ENCODE measurements at regions of chr2 and their contacts with region 1.

Region 1: DNA sequence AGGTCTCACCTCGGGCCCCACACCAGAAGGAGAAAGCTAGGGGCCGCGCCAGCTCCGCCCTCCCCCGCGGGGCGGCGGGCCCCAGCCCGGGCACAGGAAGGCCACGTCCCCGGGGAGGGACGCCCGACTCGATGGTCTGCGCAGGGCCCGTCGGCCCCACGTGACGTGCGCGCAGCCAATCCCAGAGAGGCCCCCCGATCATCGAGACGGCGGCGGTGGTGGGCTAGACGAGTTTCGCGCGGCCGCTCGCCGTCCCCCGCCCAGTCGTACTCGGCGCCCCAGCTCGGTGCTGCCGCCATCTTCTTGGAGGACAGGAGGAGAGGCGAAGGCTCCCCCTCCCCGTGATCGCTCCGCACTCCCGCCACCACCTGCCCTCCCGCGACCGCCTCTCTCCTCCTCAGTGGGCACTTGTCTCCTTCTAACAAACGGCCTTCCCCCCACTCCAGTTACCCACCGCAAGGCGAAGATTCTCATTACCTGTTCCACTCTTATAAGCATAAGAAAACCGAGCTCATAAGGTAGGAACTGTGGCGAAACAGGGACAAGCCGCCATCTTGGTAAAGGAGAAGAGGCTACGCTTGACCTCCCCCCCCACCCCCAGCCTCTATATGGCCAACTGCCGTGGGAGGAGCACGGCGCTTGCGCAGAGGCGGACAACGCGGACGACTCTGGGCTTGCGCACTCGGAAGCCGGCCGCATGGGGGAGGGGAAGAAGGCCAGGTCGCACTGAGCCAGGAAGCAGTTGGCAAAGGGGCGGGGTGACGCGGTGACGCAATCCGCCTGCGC is at the start of gene HDLBP:
- DNase-seq: peak; percentile 99
- H3K4me3 ChIP-seq: peak within 1 kb of the TSS; percentile 96
- H3K27ac ChIP-seq: peak within 1 kb of the TSS; percentile 87
- H3K4me1 ChIP-seq: peaks cover 68% of the 10 kb centered on the region
- CTCF ChIP-seq: peak; percentile 79
- total RNA-seq, gene HDLBP: 155 and 176 TPM in 2 replicates

Region 2: GRCh38 chr2:241339839-241340630 is 24.7 kb after region 1 on chr2:
- CTCF ChIA-PET with region 1: no interaction called
- POLR2A ChIA-PET with region 1: interaction called, 4 read pairs
- intact Hi-C with region 1: loop called (anchors 1 kb)
- DNase-seq: no peak
- H3K4me3 ChIP-seq: no peak overlapping the region
- H3K27ac ChIP-seq: peak overlapping the region; percentile 22
- H3K4me1 ChIP-seq: peaks cover 48% of the 10 kb centered on the region
- CTCF ChIP-seq: no peak

Region 3: GRCh38 chr2:241508240-241509154 is 193.2 kb after region 1 on chr2 and contains the start of gene STK25:
- CTCF ChIA-PET with region 1: no interaction called
- POLR2A ChIA-PET with region 1: interaction called, 3 read pairs
- intact Hi-C with region 1: loop called (anchors 1 kb)
- DNase-seq: peak; percentile 98
- H3K4me3 ChIP-seq: peak within 1 kb of the TSS; percentile 98
- H3K27ac ChIP-seq: peak within 1 kb of the TSS; percentile 26
- H3K4me1 ChIP-seq: peaks cover 18% of the 10 kb centered on the region
- CTCF ChIP-seq: no peak
- total RNA-seq, gene STK25: 167 and 201 TPM in 2 replicates

Measured in OCI-LY7 (cell line).